ENCODE measurements at regions of chr11 and their contacts with region 1.

Region 1: GRCh38 chr11:727859-728748 is 19.2 kb upstream of the TALDO1 start:
- DNase-seq: peak; percentile 63 to 81
- ATAC-seq: peak; percentile 65 to 91 (median 86)
- H3K4me3 ChIP-seq: peak overlapping the region in 1 of 10 donors; percentile 15
- H3K27ac ChIP-seq: peak overlapping the region in 4 of 10 donors; percentile 9 to 53 (median 42)
- H3K4me1 ChIP-seq: peaks cover 10 to 44% (median 24%) of the 10 kb centered on the region in 9 donors
- H3K27me3 ChIP-seq: peaks cover 7 to 56% (median 41%) of the 10 kb centered on the region in 7 donors
- CTCF ChIP-seq: peak; percentile 86 to 99 (median 96)

Region 2: DNA sequence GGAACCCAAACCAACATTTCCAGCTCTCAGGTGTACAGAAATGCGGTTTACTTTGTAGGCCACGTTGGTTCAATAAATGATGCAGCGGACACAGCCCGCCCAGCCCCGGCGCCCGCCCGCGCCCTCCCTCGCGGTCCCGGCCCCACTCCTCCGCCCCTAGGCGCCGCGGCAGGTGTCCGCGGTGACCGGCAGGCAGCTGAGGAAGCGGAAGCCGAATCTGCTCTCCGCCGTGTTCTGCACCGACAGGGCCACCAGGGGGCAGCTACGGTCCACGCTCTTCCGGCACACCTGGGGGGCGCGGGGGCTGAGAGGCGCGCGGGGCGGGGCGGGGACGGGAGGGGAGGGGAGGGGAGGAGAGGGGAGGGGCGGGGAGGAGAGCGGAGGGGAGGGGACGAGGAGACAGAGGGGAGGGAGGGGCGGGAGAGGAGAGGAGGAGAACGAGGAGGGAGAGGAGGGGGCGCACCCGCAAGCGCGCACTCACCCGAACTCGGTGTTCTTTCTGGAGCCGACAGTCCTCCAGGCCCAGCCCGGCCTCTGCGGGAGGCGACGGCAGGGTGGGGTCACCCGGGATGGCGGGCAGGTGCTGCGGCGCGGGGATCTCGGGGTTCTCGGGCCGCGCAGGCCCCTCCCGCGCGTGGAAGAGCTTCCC is 173.2 kb before region 1 on chr11:
- intact Hi-C with region 1: loop called (anchors 1 to 5 kb)
- DNase-seq: peak in 1 of 2 donors; percentile 64
- ATAC-seq: peak in 7 of 8 donors; percentile 37 to 67 (median 57)
- H3K4me3 ChIP-seq: peak overlapping the region in 7 of 10 donors; percentile 11 to 44 (median 28)
- H3K27ac ChIP-seq: no peak overlapping the region
- H3K4me1 ChIP-seq: peaks cover 4 to 19% (median 15%) of the 10 kb centered on the region in 9 donors
- H3K27me3 ChIP-seq: peaks cover 31 to 97% (median 77%) of the 10 kb centered on the region in 7 donors
- CTCF ChIP-seq: peak; percentile 21 to 68 (median 53)

Region 3: GRCh38 chr11:662689-663274 is 65.3 kb before region 1 on chr11:
- intact Hi-C with region 1: loop called (anchors 2 to 10 kb)
- DNase-seq: peak; percentile 47 to 65
- ATAC-seq: peak in 7 of 8 donors; percentile 45 to 80 (median 66)
- H3K4me3 ChIP-seq: no peak overlapping the region
- H3K27ac ChIP-seq: no peak overlapping the region
- H3K4me1 ChIP-seq: peaks cover 0 to 23% (median 8%) of the 10 kb centered on the region in 9 donors
- H3K27me3 ChIP-seq: no peaks in the 10 kb centered on the region
- CTCF ChIP-seq: peak in 8 of 9 donors; percentile 61 to 82 (median 75)

Measured in heart right ventricle (tissue), 16 donors.